ENCODE measurements at regions of chr3 and their contacts with region 1.

Region 1: GRCh38 chr3:100590114-100590839 is 19.1 kb upstream of the ADGRG7 start:
- DNase-seq: no peak
- ATAC-seq: peak; percentile 77

Region 2: DNA sequence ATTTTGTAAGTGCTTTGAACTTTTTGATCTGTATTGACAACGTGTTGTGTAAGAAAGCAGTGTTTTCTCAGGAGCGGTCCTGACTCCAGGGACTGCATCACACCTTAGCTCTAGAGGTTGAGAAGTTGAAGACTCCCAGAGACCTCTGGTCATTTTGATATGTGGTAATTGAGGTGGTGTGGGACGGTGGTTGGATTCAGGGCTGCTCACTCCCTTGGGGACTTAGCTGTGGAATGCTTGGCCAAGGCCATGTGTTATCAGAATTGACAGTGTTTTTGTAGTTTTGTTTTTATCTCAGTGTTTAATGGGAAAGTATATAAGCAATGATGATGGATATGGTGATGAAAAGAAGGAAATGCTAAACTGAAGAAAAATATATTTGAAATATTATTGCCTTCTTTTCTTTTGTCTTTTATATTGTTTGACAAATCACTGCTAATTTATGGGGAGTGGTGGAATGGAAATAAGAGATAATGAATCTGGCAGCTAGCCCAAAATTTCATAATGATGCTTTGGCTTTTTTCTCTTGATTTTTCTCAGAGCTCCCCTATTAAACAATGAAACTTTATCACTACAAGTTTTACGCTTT is 756.6 kb before region 1 on chr3:
- intact Hi-C with region 1: loop called (anchors 5 kb)
- DNase-seq: no peak
- ATAC-seq: peak; percentile 31

Region 3: GRCh38 chr3:100463002-100463401 is 127.3 kb before region 1 on chr3:
- intact Hi-C with region 1: loop called (anchors 5 kb)
- DNase-seq: no peak
- ATAC-seq: peak; percentile 84

Measured in left ventricle myocardium superior (tissue), 1 donor.